Left cardiac atrium (tissue), 4 donors: ENCODE measurements at regions of chr16 and their contacts with region 1.

Region 1: DNA sequence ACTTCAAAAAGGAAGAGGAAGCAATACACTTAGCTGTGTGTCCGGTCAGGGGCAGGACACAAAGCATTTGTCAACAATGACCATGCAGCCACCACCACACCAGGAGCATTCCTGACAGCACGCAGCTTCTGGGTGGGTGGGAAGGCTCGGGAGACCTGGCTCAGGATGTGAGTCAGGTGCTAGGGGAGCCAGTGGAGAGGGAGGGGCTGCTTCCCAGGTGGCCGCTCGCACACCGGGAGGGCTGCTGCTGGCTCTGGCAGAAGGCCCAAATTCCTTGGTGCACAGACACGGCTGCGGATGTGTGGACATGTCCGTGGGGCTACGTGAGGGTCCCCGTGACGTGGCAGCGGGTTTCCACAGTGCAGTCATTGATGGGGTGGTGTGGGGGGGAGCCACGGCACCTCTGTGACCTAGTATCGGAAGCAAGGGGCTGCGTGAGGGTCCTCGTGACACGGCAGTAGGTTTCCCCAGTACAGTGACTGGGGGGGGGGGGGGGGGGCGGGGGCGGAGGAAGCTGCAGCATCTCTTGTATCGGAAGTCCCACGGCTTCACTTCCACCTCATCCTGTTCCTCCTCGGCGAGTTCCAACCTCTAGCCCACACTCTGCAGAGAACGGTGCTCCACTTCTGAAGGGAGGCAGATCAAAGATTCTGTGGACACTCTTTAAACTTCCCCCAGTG is 112.8 kb downstream of the ZNF778 start:
- DNase-seq: peak; percentile 49
- ATAC-seq: no peak

Region 2: DNA sequence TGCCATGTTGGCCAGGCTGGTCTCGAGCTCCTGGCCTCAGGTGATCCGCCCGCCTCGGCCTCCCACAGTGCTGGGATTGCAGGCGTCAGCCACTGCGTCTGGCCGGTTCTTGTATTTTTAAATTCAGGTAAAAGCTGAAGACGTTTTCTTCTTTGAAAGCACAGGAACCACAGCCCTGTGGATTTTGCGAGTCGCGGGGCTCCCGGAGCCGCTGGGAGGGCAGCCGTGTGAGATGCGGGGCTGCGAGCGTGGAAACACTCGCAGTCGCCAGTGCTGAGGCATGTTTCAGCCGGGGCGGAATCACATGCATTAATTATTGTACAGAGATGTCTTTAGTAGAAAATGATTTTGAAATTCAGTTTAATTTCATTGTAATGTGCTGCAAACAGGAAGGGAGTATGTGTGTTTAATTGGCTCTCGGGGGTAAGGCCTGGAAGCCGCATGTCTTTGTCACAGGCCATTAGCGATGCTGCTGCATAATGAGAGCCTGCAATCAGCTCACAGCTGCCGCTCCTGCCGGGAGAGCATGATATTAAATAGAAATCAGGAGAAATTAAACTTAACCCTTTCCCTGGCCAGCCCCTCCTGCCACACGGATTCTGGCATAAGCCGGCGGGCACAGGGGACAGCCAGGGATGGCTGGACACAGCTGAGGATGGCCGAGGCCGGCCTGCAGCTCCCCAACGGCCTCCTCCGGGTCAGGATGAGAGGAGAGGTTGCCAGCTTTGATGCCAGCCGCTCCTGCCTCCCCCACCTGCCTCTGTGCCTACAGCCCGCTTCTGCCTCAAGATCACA is 194.1 kb before region 1 on chr16:
- intact Hi-C with region 1: no loop called
- DNase-seq: no peak
- ATAC-seq: no peak

Region 3: GRCh38 chr16:89395141-89395874 is 65.0 kb after region 1 on chr16:
- intact Hi-C with region 1: loop called in 1 of 2 experiments (anchors 10 kb)
- DNase-seq: peak; percentile 90
- ATAC-seq: peak; percentile 95 to 97

Region 4: GRCh38 chr16:89507834-89508590 is 177.7 kb after region 1 on chr16 and contains the start of gene SPG7:
- intact Hi-C with region 1: loop called (anchors 5 to 10 kb)
- DNase-seq: peak; percentile 88
- ATAC-seq: peak; percentile 95
- total RNA-seq, gene SPG7: 78.5 to 99.5 TPM

Region 5: DNA sequence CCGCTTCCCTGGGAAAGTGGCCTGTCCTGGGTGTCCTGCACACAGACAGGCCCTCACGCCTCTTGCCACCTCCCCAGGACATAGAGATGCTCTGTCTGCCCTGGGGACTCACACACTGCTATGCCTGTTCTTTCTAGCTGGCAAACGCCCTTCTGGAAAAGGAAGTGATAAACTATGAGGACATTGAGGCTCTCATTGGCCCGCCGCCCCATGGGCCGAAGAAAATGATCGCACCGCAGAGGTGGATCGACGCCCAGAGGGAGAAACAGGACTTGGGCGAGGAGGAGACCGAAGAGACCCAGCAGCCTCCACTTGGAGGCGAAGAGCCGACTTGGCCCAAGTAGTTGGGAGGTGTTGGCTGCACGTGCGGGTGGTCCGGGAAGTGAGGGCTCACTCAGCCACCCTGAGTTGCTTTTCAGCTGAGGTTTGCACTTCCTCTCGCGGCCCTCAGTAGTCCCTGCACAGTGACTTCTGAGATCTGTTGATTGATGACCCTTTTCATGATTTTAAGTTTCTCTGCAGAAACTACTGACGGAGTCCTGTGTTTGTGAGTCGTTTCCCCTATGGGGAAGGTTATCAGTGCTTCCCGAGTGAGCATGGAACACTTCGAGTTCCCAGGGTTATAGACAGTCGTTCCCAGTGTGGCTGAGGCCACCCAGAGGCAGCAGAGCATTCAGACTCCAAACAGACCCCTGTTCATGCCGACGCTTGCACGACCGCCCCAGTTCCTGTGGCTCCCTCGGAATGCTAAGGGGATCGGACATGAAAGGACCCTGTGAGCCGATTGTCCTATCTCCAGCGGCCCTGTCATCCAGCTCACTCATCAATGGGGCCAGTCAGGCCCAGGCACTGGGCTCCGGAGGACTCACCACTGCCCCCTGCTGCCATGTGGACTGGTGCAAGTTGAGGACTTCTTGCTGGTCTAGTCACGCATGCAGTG is 226.7 kb after region 1 on chr16:
- intact Hi-C with region 1: loop called (anchors 5 kb)
- DNase-seq: peak; percentile 89
- ATAC-seq: peak in 1 of 2 donors; percentile 34